Tibial artery (tissue), 4 donors: ENCODE measurements at regions of chr2 and their contacts with region 1.

Region 1: DNA sequence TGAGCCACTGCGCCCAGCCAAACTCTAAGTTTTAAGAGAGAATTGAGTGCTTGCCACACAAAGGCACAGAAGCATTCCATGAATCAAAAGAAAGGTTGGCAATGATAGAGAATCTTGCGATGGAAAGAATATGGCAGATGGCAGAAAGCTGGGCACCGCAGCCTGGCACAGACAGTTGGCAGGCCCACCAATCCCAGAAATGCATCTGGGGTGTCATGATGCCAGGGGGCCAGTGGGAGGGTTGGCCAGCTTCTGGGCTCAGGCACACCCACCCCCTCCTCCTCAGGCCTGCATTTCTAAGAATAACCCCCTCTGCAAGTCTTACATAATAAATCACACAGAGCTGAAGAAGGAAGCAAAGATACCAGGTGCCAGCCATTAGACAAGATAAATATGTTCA is 19.6 kb downstream of the ZNF2 start:
- DNase-seq: no peak
- H3K4me3 ChIP-seq: no peak overlapping the region
- H3K27ac ChIP-seq: no peak overlapping the region
- H3K4me1 ChIP-seq: no peaks in the 10 kb centered on the region
- H3K27me3 ChIP-seq: no peaks in the 10 kb centered on the region
- CTCF ChIP-seq: no peak

Region 2: DNA sequence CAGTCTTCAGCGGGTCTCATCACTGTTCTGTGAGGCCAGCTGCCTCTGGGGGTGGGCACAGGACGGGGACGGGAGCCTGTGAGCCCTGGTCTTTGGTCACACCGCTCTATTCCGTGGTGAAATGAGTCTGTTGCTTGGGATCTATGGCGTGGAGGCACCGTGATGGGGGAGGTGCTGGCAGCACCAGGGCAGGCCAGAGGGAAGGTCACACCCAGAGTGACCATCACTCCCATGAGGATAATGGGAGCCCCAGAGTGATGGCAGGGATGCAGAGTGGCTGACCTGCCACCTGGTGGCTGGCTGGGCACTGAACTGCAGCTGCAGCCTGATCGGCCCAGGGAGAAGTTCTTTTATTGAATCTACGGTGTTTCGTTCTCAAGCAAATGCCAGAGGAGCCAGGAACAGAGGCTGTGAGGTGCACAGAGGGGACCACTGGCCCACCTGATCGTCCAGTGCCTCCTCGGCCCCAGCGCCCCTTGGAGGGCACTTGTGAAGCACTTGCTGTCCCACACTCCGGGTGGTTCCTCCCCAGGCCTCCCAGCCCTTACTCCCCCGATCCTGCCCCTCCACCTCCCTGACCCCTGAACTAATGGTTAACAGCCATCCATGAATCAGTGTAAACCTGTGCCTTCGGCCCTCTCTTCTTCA is 129.9 kb after region 1 on chr2:
- intact Hi-C with region 1: loop called (anchors 10 kb)
- DNase-seq: no peak
- H3K4me3 ChIP-seq: no peak overlapping the region
- H3K27ac ChIP-seq: no peak overlapping the region
- H3K4me1 ChIP-seq: peaks cover 0 to 24% (median 4%) of the 10 kb centered on the region in 4 donors
- H3K27me3 ChIP-seq: no peaks in the 10 kb centered on the region
- CTCF ChIP-seq: peak; percentile 26 to 35